PC-9 (cell line): ENCODE measurements at regions of chr14 and their contacts with region 1.

Region 1: GRCh38 chr14:51780006-51780692 is 80.3 kb upstream of the GNG2 start:
- DNase-seq: peak in 1 of 2 experiments; percentile 69
- H3K4me3 ChIP-seq: no peak overlapping the region
- H3K27ac ChIP-seq: no peak overlapping the region
- H3K4me1 ChIP-seq: 0 out of 2 replicates have a peak, but pooled peaks cover 4% of the 10 kb centered on the region
- H3K27me3 ChIP-seq: no peaks in the 10 kb centered on the region
- CTCF ChIP-seq: peak; percentile 91

Region 2: DNA sequence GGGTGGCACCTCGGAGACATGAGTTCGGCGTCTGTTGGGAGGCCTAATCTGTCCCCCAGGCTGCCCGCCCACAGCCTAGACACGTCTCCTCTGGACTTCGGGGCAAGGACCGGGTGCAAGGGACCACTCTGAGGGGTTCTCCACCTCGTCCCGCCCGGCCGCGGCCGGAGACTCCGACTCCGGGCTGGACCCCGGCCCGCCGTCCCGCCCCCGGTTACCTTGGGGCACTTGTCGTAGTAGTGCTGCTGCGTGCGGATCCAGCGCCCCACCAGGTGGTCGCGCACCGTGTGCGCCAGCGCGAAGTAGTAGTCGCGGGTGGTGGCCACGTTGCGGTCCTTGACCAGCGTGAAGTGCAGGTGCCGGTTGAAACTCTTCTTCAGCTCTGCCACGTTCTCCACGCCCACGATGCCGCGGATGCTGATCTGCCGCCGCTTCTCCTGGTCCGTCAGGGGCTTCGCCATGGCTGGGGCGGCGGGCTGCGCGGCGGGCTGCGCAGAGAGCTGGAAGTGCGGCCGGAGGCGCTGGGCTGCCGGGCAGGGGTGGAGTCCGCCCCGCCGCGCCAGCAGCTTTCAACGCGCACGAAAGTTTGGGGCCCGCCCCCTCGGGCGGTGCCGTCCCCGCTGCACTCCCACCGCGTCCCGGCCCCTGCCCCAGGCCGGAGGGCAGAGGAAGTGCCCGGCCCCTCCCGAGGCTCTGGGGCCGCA is 836.1 kb before region 1 on chr14 and contains the start of gene PYGL:
- CTCF ChIA-PET with region 1: no interaction called
- POLR2A ChIA-PET with region 1: no interaction called
- intact Hi-C with region 1: loop called (anchors 5 kb)
- DNase-seq: peak; percentile 59 to 85
- H3K4me3 ChIP-seq: peak within 1 kb of the TSS; percentile 93
- H3K27ac ChIP-seq: peak within 1 kb of the TSS; percentile 76
- H3K4me1 ChIP-seq: peaks cover 7% of the 10 kb centered on the region; the same call in 1 of the 2 replicates
- H3K27me3 ChIP-seq: no peaks in the 10 kb centered on the region
- CTCF ChIP-seq: no peak
- total RNA-seq, gene PYGL: 75.6 and 84.2 TPM in 2 replicates

Region 3: DNA sequence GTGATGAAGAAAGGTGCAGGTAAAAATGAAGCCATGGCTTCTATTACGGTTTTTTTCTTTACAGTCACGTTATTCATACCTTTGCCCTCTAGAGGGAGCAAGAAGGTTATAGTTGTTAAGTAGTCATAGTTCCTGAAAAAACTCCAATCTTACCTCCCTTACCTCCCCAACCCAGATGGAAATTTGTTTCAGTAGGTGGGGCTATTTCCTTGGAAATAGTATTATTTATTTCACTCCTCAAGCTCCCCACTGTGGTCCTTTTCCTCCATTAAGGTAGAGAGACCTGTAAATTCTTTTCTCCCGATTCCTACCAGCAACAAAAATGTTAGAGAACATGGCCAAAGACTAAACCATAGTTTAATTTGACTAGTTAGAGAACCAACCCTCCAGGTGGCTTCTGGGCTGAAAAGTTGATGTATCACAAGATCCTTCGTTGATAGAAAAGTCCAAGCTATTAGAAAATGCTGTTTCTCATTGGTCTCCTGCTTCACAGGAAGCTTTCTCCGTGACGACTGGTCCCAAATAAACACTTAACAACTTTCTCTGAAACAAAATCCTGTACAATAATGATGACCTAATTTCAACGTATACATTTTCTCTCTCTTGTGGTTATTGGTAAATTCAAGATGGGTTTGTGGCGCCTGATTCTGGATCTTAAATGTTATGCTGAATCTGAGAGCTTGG is 496.6 kb before region 1 on chr14:
- CTCF ChIA-PET with region 1: interaction called, 36 read pairs
- POLR2A ChIA-PET with region 1: no interaction called
- intact Hi-C with region 1: loop called (anchors 1 kb)
- DNase-seq: peak; percentile 16 to 76
- H3K4me3 ChIP-seq: no peak overlapping the region
- H3K27ac ChIP-seq: no peak overlapping the region
- H3K4me1 ChIP-seq: no peaks in the 10 kb centered on the region
- H3K27me3 ChIP-seq: no peaks in the 10 kb centered on the region
- CTCF ChIP-seq: peak; percentile 91

Region 4: GRCh38 chr14:51554953-51555352 is 225.2 kb before region 1 on chr14:
- CTCF ChIA-PET with region 1: interaction called, 3 read pairs
- POLR2A ChIA-PET with region 1: no interaction called
- intact Hi-C with region 1: loop called (anchors 2 kb)
- DNase-seq: no peak
- H3K4me3 ChIP-seq: no peak overlapping the region; the same call in 1 of the 2 replicates
- H3K27ac ChIP-seq: peak overlapping the region; percentile 70
- H3K4me1 ChIP-seq: peaks cover 30% of the 10 kb centered on the region
- H3K27me3 ChIP-seq: no peaks in the 10 kb centered on the region
- CTCF ChIP-seq: no peak; the same call in 1 of the 2 replicates

Region 5: DNA sequence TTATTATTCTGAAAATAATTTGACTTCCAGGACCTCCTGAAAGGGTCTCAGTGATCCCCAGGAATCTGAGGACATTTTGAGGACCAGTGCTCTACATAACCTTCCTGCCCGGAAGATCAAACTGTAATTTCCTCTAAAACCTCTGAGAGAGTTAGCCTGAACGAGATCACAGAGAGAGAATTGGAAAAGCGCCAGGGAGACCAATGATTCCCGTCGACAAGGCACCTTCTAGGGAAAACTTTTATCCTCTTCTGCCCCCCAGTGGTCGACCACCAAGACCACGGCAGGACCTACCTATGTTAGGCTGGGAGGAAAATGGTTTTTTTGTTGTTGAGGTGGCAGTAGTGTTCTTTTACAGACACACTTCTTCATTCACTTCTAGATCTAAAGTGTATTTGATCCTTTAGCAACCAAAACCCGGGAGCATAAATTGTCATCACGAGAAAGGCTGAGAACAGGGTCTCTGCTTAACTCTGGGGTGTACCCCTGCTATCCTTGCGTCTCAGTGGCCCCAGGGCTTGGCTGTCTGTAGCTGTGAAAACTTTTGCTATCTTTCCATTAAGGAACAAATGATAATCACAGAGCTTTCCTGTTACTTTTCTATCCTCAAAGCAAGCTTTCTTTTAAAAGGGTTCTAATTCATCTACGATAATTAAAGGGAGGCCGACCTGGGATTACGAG is 351.6 kb after region 1 on chr14:
- CTCF ChIA-PET with region 1: no interaction called
- POLR2A ChIA-PET with region 1: no interaction called
- intact Hi-C with region 1: loop called (anchors 1 kb)
- DNase-seq: peak; percentile 52 to 78
- H3K4me3 ChIP-seq: no peak overlapping the region
- H3K27ac ChIP-seq: no peak overlapping the region
- H3K4me1 ChIP-seq: no peaks in the 10 kb centered on the region; the same call in 1 of the 2 replicates
- H3K27me3 ChIP-seq: no peaks in the 10 kb centered on the region
- CTCF ChIP-seq: peak; percentile 75